Heart left ventricle (tissue), 16 donors: ENCODE measurements at regions of chr15 and their contacts with region 1.

Region 1: DNA sequence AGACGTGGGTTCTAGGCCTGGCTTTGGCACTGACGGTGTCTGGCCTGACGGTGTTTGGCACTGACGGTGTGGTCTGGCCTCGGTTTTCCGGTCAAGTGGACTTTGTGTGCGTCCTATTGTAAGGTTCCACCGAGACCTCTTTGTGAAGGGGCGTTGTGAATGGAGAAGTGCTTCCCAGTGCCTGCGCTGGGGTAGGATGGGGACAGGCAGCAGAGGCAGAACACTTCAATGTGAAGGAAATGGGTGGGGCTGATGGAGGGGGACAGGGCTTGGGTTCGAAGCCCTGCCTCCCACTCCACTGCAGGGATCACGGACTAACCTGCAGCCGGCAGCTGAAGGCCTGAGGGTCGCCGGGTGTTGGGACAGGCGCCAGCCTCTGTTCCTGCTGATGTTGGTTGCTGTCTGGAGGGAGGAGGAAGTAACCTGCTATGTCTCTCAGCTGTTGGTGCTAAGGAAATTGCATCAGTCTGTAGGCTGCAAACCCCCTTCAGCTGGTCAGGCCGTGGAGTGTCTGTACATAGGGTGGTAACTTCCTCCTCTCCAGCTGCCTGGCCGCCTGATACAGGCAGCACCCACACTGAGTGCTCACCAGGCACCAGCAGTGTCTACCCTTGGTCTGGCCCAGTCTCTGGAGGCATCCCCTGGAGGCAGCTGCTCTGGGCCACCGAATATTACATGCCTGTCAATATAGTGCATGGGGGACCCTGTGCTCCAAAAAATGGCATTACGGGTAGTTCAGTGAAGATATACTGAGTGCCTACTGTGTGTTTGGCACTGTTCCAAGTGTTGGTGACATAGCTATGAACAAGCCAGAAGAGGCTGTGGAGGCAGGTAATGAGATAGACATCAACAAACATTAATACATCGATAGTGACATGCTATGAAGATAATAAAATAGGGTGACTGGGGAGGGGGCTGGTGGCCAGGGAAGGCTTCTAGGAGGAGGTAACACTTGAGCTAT is 1.1 kb downstream of the TM6SF1 start:
- DNase-seq: peak; percentile 56 to 78 (median 68)
- ATAC-seq: peak; percentile 65 to 87 (median 77)
- H3K4me3 ChIP-seq: peak overlapping the region in 11 of 12 donors; percentile 57 to 82 (median 62)
- H3K27ac ChIP-seq: peak overlapping the region; percentile 59 to 90 (median 74)
- H3K4me1 ChIP-seq: peaks cover 4 to 50% (median 24%) of the 10 kb centered on the region in 12 donors
- H3K27me3 ChIP-seq: peaks cover 0 to 18% (median 0%) of the 10 kb centered on the region in 9 donors
- CTCF ChIP-seq: no peak
- POLR2A ChIP-seq: no peak

Region 2: DNA sequence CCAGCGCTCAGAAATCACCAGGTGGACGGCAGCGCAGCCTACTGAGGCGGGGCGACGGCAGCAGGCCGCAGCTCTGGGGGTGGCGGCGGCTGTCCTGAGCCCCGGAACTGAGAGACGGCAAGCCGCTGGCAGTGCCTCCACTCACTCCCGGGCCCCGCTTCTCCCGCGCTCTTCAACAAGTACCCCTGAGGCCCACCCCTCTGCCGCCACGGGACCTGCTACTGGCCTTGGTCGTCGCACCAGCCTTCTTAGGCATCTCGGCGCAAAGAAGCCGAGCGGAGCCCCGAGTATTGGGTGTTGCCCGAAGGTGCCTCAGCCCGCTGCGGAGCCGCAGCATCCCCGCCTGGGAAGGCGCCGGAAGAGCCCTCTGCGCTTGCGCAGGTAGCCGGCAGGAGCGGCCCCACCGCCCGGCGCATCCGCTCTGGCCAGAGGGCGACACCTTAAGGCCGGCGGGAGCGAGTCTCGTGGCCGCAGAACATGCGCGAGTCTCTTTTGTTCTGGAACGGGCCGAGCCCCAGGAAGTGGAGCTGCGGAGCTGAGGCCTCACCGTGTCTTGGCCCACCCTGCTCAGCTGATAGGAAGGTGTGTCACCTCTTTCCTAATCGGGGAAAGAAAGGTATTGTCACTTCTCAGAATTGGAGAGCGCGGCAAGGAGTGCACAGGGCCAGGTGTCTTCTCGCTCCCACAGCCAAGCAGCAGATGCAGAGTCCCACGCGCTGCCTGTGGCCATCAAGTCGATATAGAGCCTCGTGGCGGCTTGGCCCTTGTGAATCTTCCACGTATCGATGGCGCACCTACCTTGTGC is 97.1 kb before region 1 on chr15 and contains the start of gene C15orf40:
- intact Hi-C with region 1: loop called in 1 of 10 experiments (anchors 5 kb)
- DNase-seq: peak; percentile 91 to 95 (median 94)
- ATAC-seq: peak; percentile 96 to 99 (median 98)
- H3K4me3 ChIP-seq: peak within 1 kb of the TSS; percentile 67 to 100 (median 89)
- H3K27ac ChIP-seq: peak within 1 kb of the TSS; percentile 14 to 90 (median 82)
- H3K4me1 ChIP-seq: peaks cover 0 to 31% (median 21%) of the 10 kb centered on the region in 12 donors
- H3K27me3 ChIP-seq: no peaks in the 10 kb centered on the region
- CTCF ChIP-seq: peak; percentile 41 to 87 (median 70)
- POLR2A ChIP-seq: peak in 1 of 2 donors; percentile 71
- total RNA-seq, gene C15orf40: 6.0 to 17.0 (median 10.5) TPM

Region 3: DNA sequence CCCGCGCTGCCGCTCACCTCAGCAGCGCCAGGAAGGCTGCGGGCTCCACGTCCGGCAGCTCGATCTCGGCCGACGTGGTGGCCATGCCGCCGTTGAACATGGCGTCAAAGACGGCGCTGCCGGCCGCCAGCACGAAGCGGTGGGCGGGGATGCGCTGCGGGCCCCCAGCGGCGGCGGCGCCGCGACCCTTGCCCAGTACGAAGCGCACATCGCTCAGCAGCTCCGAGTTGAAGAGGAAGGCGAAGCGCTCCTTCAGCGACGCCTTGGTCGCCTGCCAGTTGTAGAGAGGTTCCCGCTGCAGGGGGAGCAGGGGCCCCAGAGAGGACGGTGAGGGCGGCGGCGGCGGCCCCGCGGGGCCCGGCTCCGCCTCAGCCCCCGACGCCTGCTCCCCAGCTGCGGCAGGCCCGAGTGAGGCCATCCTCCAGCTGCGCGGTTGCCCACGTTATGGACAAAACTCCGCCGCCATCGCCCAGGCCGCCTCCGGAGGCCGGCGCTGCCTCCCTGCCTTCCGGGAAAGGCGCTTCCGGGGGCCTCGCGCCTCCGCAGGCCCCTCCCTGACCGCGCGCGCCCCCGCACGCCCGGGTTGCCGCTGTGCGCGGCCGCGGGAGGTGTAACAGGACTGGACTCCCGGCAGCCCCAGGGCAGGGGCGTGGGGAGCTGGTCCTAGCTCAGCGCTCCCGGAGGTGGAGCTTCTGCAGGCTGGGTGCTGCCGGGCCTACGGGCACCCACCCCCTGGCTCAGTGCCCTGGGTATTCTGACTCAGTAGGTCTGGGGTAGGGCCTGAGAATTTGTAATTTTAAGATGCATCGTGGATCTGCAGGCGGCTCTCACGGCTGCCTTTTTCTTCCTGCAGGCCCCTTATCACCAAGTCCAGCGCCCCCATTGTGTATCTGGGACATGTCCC is 41.6 kb before region 1 on chr15 and contains the start of gene BTBD1:
- intact Hi-C with region 1: loop called in 3 of 10 experiments (anchors 2 to 5 kb)
- DNase-seq: peak; percentile 93 to 98 (median 96)
- ATAC-seq: peak; percentile 97 to 99 (median 98)
- H3K4me3 ChIP-seq: peak within 1 kb of the TSS; percentile 70 to 98 (median 94)
- H3K27ac ChIP-seq: peak within 1 kb of the TSS; percentile 93 to 99 (median 98)
- H3K4me1 ChIP-seq: peaks cover 0 to 47% (median 38%) of the 10 kb centered on the region in 12 donors
- H3K27me3 ChIP-seq: no peaks in the 10 kb centered on the region
- CTCF ChIP-seq: peak in 6 of 12 donors; percentile 6 to 35 (median 20)
- POLR2A ChIP-seq: peak; percentile 62 to 91
- total RNA-seq, gene BTBD1: 109 to 192 (median 140) TPM

Region 4: DNA sequence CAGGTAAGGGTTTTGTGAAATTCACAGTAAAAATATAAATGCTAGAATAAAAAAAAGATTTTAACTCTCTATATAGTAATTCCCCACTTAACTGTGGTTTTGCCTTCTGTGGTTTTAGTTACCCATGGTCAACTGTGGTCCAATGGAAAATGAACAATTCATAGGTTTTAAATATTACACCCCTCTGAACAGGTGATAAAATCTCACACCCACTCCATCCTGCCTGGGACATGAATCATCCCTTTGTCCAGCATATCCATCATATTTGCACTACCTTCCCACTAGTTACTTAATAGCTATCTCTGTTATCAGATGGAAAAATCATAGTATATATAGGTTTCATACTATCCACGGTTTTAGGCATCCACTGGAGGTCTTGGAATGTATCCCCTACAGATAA is 49.9 kb after region 1 on chr15:
- intact Hi-C with region 1: loop called in 1 of 10 experiments (anchors 2 kb)
- DNase-seq: no peak
- ATAC-seq: no peak
- H3K4me3 ChIP-seq: no peak overlapping the region
- H3K27ac ChIP-seq: no peak overlapping the region
- H3K4me1 ChIP-seq: no peaks in the 10 kb centered on the region
- H3K27me3 ChIP-seq: no peaks in the 10 kb centered on the region
- CTCF ChIP-seq: no peak
- POLR2A ChIP-seq: no peak